Gastrocnemius medialis (tissue), 4 donors: ENCODE measurements at regions of chr14 and their contacts with region 1.

Region 1: DNA sequence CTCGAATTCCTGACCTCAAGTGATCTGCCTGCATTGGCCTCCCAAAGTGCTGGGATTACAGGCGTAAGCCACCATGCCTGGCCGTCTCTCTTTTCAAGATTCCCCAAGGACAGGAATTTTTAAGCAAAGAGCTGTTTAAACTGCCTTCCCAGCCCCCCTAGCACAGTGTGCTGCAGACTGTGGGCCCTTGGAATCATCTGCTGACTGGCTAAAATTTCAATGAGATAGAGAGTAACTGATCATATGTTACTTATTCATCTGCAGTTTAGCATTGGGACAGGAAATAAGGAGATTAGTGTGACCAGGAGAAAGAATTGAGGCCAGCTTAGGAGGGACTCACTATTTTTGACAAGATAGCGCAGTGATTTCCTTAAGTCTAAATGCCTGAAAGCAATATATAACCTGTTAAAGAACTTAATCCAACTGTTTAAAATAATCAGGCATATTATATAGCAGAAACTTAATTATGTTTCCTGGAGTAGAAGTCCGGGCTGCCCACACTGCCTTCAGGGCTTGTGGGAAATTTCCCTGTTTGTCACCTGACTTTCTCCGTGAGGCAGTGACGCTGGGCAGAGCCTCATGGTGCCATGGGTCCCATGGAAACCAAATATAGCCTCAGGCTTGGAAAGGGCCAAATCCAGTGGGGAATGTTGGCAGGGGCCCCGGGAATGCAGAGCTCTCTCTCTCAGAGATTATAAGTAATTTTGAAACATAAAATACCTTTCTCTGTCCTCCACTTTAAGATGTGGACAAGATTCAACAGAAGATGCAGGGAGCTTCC is 22.8 kb upstream of the CEBPE start:
- DNase-seq: peak; percentile 46 to 61
- ATAC-seq: peak; percentile 28 to 34
- H3K4me3 ChIP-seq: no peak overlapping the region
- H3K27ac ChIP-seq: peak overlapping the region; percentile 90 to 97 (median 96)
- H3K4me1 ChIP-seq: peaks cover 47 to 48% of the 10 kb centered on the region in 2 donors
- H3K27me3 ChIP-seq: no peaks in the 10 kb centered on the region
- CTCF ChIP-seq: no peak
- POLR2A ChIP-seq: peak in 1 of 2 donors; percentile 33

Region 2: DNA sequence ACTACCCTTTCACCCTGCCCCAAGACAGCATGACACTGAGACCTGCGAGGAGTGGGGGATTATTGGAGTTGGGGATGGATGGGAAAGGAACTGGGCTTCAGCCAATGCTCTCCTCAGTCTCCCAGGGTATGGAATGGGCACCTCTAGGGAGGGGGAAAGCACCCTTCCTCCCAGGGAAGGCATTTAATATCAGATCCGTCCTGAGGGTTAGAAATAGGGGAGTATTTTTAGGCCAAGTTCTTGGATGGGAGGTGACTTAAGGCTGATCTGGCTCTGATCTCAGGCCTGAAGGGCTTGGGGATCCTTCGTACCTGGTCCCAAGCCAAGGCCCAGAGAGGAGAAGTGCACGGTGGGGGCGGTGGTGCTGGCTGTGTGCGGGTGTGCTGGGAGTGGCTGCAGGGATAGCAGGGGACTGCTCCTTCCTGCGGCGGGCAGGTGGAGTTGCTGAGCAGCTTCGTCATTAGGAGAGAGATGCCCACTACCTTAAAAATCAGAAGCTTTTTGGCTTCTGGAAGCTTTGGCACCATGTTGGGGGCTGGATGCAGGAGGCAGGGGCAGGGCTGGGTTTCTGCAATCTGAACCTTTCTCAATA is 15.8 kb before region 1 on chr14:
- in situ Hi-C with region 1: no loop called
- intact Hi-C with region 1: loop called (anchors 2 kb)
- DNase-seq: peak; percentile 56 to 75
- ATAC-seq: peak; percentile 28 to 40
- H3K4me3 ChIP-seq: no peak overlapping the region
- H3K27ac ChIP-seq: peak overlapping the region; percentile 71 to 85 (median 78)
- H3K4me1 ChIP-seq: peaks cover 45 to 51% of the 10 kb centered on the region in 2 donors
- H3K27me3 ChIP-seq: no peaks in the 10 kb centered on the region
- CTCF ChIP-seq: no peak
- POLR2A ChIP-seq: no peak

Region 3: GRCh38 chr14:23154964-23155587 is 13.2 kb after region 1 on chr14:
- in situ Hi-C with region 1: no loop called
- intact Hi-C with region 1: loop called (anchors 1 kb)
- DNase-seq: peak; percentile 93 to 98
- ATAC-seq: peak; percentile 72 to 75
- H3K4me3 ChIP-seq: peak overlapping the region; percentile 30 to 55 (median 46)
- H3K27ac ChIP-seq: peak overlapping the region; percentile 90 to 97 (median 96)
- H3K4me1 ChIP-seq: peaks cover 45 to 60% of the 10 kb centered on the region in 2 donors
- H3K27me3 ChIP-seq: no peaks in the 10 kb centered on the region
- CTCF ChIP-seq: no peak
- POLR2A ChIP-seq: peak; percentile 70 to 79